ENCODE measurements at regions of chrX and their contacts with region 1.

Region 1: DNA sequence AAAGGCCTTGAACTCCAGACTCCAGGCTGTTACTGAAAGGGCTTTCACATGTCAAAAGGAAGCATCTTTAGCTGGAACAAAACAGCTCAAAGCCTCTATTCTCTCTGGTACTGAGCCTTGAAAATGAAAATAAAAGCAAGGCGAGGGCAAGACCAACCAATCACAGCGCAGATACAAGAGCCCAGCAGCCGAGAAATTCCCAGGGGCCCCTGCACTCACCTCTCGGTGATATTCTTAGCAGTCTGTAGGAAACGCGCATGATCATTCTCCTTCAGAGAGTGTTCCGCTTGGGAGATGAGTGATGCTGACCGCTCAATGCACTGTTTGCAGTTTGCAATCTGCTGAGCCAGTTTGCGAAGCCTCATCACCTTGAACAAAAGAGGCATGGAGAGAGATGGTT is 138.1 kb downstream of the MID1 start:
- DNase-seq: peak; percentile 52 to 65 (median 56)
- ATAC-seq: peak in 3 of 4 donors; percentile 60 to 81 (median 65)
- H3K4me3 ChIP-seq: peak overlapping the region in 6 of 12 donors; percentile 10 to 32 (median 25)
- H3K27ac ChIP-seq: peak overlapping the region in 11 of 12 donors; percentile 62 to 95 (median 80)
- H3K4me1 ChIP-seq: peaks cover 0 to 43% (median 12%) of the 10 kb centered on the region in 12 donors
- H3K27me3 ChIP-seq: no peaks in the 10 kb centered on the region
- CTCF ChIP-seq: no peak
- POLR2A ChIP-seq: no peak

Region 2: GRCh38 chrX:9873952-9874351 is 608.3 kb before region 1 on chrX:
- intact Hi-C with region 1: no loop called
- DNase-seq: peak in 2 of 5 donors; percentile 13 to 48
- ATAC-seq: peak in 2 of 4 donors; percentile 47 to 56
- H3K4me3 ChIP-seq: no peak overlapping the region
- H3K27ac ChIP-seq: no peak overlapping the region
- H3K4me1 ChIP-seq: no peaks in the 10 kb centered on the region
- H3K27me3 ChIP-seq: peaks cover 0 to 12% (median 0%) of the 10 kb centered on the region in 9 donors
- CTCF ChIP-seq: peak; percentile 21 to 62 (median 45)
- POLR2A ChIP-seq: no peak

Region 3: DNA sequence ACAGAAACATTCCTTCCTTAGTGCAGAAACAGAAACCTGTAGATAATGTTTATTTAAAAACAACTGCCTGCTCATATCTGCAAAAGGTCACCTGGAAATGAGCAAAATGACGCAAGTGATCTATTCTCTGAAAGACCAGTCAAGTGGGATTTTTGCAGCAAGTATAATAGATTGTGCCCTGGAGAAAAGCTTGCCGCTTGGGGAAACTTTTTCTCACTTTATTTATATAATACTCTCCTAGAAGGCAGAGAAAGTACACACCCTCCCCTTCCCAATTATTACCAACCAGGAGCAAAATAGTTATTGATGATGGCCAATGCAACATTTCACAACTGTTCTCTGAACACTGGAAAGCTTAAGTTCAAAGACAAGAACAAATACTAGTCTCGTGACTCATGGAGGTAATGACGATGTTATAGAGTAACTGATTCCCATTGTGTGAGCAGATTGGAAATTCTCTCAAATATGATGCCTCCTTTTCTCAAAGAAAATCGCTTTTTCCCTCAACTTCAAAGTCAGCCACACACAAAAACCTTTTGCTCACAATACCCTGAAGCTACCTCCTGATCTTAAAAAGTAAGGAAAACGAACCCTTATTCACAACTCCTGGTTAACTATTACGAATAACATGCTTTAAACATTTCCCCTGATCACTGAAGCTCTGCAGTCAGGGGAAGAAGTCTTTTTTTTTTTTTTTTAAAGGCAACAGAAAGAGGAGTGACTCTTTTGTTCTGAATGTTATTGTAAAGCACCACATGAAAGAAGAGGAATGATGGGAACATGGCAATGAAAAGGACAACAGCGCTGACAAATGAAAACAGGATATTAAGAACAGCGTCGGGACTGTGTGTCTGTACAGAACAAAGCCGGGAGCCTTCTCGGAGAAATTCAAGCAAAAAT is 97.1 kb after region 1 on chrX:
- intact Hi-C with region 1: loop called in 2 of 10 experiments (anchors 10 kb)
- DNase-seq: no peak
- ATAC-seq: peak in 1 of 4 donors; percentile 36
- H3K4me3 ChIP-seq: peak overlapping the region in 4 of 12 donors; percentile 5 to 24 (median 10)
- H3K27ac ChIP-seq: peak overlapping the region in 9 of 12 donors; percentile 8 to 77 (median 42)
- H3K4me1 ChIP-seq: peaks cover 0 to 34% (median 7%) of the 10 kb centered on the region in 12 donors
- H3K27me3 ChIP-seq: no peaks in the 10 kb centered on the region
- CTCF ChIP-seq: no peak
- POLR2A ChIP-seq: no peak

Region 4: DNA sequence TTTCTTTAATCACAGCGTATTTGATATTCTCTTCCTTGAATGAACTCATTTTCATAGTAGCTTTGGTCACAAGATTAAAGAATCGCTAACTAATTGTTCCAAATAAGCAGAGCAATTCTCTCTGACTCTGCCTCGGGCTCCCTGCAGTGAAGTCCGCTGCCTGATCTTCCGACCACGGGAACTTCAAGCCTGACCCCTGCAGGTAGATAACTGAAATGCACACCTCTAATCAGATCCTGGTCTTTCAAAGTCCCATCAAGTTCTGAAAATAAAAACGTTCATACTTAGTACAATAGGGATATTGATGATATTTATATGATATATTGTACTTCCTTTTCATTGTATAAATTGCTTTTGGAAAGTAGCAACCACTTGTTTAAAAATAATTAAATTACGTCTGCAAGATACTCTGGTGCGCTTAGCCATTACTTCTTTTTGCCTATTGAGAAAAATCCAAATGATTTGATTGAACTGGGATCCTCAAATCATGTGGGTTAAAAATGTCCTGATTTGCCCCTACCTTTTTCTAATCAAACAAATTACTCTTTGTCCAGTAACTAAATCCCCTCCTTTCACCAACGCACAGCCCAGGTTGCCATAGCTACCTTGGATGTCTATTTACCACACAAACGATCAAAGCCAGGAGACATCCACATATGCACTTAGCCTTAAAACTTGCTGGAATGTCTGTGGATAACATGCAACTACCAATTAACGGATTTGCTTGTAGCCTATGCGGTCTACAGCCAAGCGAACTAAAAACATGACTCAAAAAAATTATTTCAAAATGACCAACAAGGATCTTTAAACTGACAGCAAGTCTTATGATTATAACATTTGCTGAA is 133.9 kb after region 1 on chrX:
- intact Hi-C with region 1: loop called in 3 of 10 experiments (anchors 10 kb)
- DNase-seq: peak in 3 of 5 donors; percentile 30 to 35 (median 31)
- ATAC-seq: peak in 3 of 4 donors; percentile 47 to 60 (median 52)
- H3K4me3 ChIP-seq: peak overlapping the region in 6 of 12 donors; percentile 7 to 86 (median 52)
- H3K27ac ChIP-seq: peak overlapping the region in 3 of 12 donors; percentile 10 to 77 (median 19)
- H3K4me1 ChIP-seq: peaks cover 0 to 5% (median 0%) of the 10 kb centered on the region in 12 donors
- H3K27me3 ChIP-seq: peaks cover 0 to 27% (median 0%) of the 10 kb centered on the region in 9 donors
- CTCF ChIP-seq: peak; percentile 41 to 69 (median 63)
- POLR2A ChIP-seq: no peak

Region 5: GRCh38 chrX:10797466-10797865 is 315.2 kb after region 1 on chrX:
- intact Hi-C with region 1: no loop called
- DNase-seq: no peak
- ATAC-seq: no peak
- H3K4me3 ChIP-seq: no peak overlapping the region
- H3K27ac ChIP-seq: no peak overlapping the region
- H3K4me1 ChIP-seq: peaks cover 0 to 4% (median 0%) of the 10 kb centered on the region in 12 donors
- H3K27me3 ChIP-seq: no peaks in the 10 kb centered on the region
- CTCF ChIP-seq: no peak
- POLR2A ChIP-seq: no peak